Heart left ventricle (tissue), 16 donors: ENCODE measurements at regions of chr10 and their contacts with region 1.

Region 1: DNA sequence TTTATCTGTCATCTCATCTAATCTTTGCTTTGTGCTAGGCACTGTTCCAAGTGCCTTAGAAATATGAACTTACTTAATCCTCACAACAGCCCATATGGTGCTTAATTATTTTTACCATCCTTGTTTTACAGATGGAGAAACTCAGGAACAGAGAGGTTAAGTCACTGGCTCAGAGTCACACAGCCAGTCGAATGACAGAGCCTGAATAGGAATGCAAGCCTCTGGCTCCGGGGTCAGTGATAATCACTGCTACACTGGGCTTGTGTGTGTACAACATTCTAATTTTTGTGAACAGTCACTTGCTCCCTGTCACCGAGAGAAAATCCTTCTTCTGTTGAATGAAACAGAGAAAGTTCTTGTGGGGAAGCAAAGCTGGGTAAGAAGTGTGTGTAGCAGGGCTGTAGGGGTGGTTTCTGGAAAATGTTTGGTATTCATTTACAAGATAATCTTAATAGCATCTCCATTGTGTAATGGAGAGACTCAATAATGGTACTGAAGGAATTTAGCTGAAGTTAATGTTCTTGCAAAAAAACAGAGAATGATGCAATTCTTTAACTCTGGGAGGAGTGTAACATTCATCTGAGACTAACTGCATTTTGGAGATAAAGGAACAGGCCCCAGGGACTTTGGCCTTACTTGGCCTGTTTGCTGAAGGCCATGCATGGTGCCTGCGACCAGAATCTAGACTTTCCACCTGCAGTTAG is 290.6 kb downstream of the FRMD4A start:
- DNase-seq: no peak
- ATAC-seq: peak in 3 of 4 donors; percentile 40 to 81 (median 76)
- H3K4me3 ChIP-seq: no peak overlapping the region
- H3K27ac ChIP-seq: peak overlapping the region in 11 of 12 donors; percentile 4 to 73 (median 49)
- H3K4me1 ChIP-seq: peaks cover 0 to 28% (median 14%) of the 10 kb centered on the region in 12 donors
- H3K27me3 ChIP-seq: no peaks in the 10 kb centered on the region
- CTCF ChIP-seq: no peak
- POLR2A ChIP-seq: no peak

Region 2: GRCh38 chr10:13971601-13972475 is 68.3 kb before region 1 on chr10:
- intact Hi-C with region 1: no loop called
- DNase-seq: no peak
- ATAC-seq: no peak
- H3K4me3 ChIP-seq: peak overlapping the region in 2 of 12 donors; percentile 12 to 17
- H3K27ac ChIP-seq: no peak overlapping the region
- H3K4me1 ChIP-seq: peaks cover 0 to 13% (median 0%) of the 10 kb centered on the region in 12 donors
- H3K27me3 ChIP-seq: peaks cover 0 to 6% (median 0%) of the 10 kb centered on the region in 9 donors
- CTCF ChIP-seq: no peak
- POLR2A ChIP-seq: no peak

Region 3: DNA sequence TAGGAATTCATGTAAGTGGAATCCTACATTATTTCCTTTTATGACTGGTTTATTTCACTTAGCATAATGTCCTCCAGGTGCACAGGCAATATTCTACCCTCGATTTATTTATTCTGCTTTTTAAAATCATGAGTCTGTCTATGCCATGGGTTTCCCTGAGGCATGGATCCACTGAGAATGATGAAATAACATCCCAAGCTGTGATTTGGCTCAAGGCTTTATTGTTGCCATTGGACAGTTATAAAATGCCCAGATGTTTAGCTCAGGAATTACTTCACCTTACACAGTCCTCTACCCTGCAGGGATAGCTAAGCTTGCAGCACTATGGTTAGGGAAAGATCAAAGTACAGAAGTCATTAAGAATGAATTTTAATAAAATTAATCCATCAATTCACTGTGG is 71.1 kb after region 1 on chr10:
- intact Hi-C with region 1: loop called in 1 of 10 experiments (anchors 2 kb)
- DNase-seq: no peak
- ATAC-seq: no peak
- H3K4me3 ChIP-seq: no peak overlapping the region
- H3K27ac ChIP-seq: no peak overlapping the region
- H3K4me1 ChIP-seq: no peaks in the 10 kb centered on the region
- H3K27me3 ChIP-seq: peaks cover 0 to 4% (median 0%) of the 10 kb centered on the region in 9 donors
- CTCF ChIP-seq: no peak
- POLR2A ChIP-seq: no peak